ENCODE measurements at regions of chr2 and their contacts with region 1.

Region 1: DNA sequence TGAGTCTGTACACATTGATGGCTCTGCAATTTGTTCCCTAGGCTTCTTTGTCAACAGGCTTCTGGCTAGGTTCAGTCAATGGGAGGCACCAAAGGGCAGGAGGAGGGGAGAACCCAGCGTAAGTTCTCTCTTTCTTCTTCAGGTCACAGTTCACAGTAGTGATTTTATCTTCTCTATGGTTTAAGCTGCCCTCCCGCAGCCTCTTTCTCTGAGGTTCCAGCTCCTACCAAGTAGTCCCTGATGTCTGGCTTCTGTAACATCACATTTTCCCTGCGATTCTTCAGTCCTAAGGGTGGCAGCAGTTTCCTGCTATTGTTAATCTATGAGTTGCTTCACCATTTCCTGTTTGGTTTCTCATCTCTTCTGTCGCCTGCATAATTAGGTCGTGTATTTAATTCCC is 107.4 kb downstream of the CPO start:
- DNase-seq: peak in 6 of 9 experiments; percentile 3 to 66 (median 12)
- ATAC-seq: peak; percentile 65
- H3K4me3 ChIP-seq: no peak overlapping the region
- H3K4me3 Mint-ChIP-seq: peak overlapping the region; percentile 24
- H3K27ac ChIP-seq: no peak overlapping the region
- H3K27ac Mint-ChIP-seq: no peak overlapping the region
- H3K4me1 ChIP-seq: peaks cover 9% of the 10 kb centered on the region
- H3K4me1 Mint-ChIP-seq: peaks cover 10% of the 10 kb centered on the region
- H3K27me3 ChIP-seq: no peaks in the 10 kb centered on the region
- H3K27me3 Mint-ChIP-seq: no peaks in the 10 kb centered on the region
- CTCF ChIP-seq: no peak

Region 2: DNA sequence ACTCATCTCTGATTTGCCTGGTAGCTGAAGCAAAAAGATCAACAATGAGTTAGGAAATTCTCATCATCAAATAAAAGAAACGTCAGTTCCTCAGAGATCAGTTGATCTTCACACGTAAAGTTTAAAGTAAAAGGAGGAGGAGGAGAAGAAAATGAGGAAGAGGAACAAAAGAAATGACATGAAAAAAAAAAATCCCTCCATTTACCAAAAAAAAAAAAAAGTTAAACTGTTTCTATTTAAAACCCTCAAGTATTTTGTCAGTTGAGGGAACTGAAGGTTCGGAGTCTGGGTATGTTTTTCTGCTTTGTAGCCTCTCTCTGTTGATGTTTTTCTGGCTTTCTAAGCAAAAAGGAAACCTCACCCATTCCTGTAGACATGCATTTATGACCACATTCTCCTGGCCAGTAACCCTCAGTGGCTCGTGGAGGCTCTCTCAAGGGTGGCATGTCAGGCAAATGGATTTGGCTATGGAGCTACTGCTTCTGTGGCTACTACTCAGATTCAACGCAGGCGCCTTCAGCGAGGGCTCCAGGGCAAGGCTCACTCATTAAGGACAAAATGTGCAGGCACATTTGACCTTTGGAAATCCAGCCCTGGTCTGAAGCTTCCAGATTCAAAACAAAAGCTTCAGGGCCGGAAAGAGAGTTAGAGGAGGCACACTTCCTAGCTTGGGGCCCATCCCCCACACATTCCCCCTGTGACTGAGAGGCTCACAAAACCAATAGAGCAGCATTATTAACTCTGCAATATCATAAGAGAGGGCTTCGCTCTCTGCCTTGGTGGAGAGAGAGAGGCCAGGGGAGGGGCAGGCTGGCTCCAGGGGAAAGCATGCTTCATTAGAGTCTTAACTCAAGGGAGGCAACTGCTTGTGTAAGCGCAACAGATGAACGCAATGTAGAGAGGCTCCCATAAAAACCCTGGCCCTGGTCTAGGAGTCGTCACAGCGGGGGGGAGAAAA is 96.8 kb after region 1 on chr2:
- CTCF ChIA-PET with region 1: interaction called, 8 read pairs
- POLR2A ChIA-PET with region 1: no interaction called
- intact Hi-C with region 1: loop called in 1 of 2 experiments (anchors 5 kb)
- DNase-seq: peak; percentile 28 to 80 (median 55)
- ATAC-seq: peak; percentile 66
- H3K4me3 ChIP-seq: peak overlapping the region; percentile 6 to 36
- H3K4me3 Mint-ChIP-seq: peak overlapping the region; percentile 71
- H3K27ac ChIP-seq: peak overlapping the region; percentile 66 to 83
- H3K27ac Mint-ChIP-seq: peak overlapping the region; percentile 91
- H3K4me1 ChIP-seq: peaks cover 40% of the 10 kb centered on the region
- H3K4me1 Mint-ChIP-seq: peaks cover 63% of the 10 kb centered on the region
- H3K27me3 ChIP-seq: no peaks in the 10 kb centered on the region
- H3K27me3 Mint-ChIP-seq: no peaks in the 10 kb centered on the region
- CTCF ChIP-seq: no peak

Region 3: DNA sequence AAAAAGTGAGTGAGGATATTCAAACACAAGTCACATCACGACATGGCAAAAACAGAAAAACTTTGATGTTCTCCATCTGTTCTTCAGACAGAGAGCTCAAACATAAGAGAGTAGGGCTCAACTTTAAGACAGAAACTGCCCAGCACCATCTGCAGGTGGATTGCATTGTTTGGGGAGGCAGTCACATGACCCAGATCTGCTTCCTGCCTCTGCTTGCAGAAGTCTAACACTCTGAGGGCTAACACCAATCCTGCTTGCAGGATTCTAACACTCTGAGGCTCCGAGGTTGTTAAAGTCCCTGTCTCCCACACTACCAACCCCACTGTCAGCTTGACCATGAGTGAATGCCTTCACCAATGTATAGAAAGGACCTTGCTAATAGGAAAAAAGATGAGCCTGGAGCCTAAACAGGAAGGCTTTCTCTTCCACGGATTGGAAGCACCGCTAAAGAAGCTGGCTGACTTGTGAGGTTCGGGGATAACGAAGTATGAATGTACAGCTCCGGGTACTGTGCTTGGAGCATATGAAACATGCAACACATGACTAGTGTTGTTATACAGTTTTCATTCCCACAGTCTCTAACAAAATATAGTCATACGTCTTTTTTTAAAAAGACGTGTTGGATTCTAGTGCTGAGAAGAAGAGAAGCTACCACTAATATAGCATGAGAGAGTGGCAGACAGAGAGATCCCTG is 306.4 kb after region 1 on chr2:
- CTCF ChIA-PET with region 1: interaction called, 3 read pairs
- POLR2A ChIA-PET with region 1: no interaction called
- intact Hi-C with region 1: loop called in 1 of 2 experiments (anchors 2 kb)
- DNase-seq: peak in 5 of 9 experiments; percentile 2 to 51 (median 22)
- ATAC-seq: peak; percentile 34
- H3K4me3 ChIP-seq: no peak overlapping the region
- H3K4me3 Mint-ChIP-seq: no peak overlapping the region
- H3K27ac ChIP-seq: no peak overlapping the region
- H3K27ac Mint-ChIP-seq: no peak overlapping the region
- H3K4me1 ChIP-seq: peaks cover 7% of the 10 kb centered on the region
- H3K4me1 Mint-ChIP-seq: peaks cover 8% of the 10 kb centered on the region
- H3K27me3 ChIP-seq: no peaks in the 10 kb centered on the region
- H3K27me3 Mint-ChIP-seq: no peaks in the 10 kb centered on the region
- CTCF ChIP-seq: no peak

Region 4: GRCh38 chr2:207612714-207613113 is 566.0 kb after region 1 on chr2:
- CTCF ChIA-PET with region 1: no interaction called
- POLR2A ChIA-PET with region 1: no interaction called
- intact Hi-C with region 1: no loop called
- DNase-seq: no peak
- ATAC-seq: no peak
- H3K4me3 ChIP-seq: no peak overlapping the region
- H3K4me3 Mint-ChIP-seq: no peak overlapping the region
- H3K27ac ChIP-seq: no peak overlapping the region
- H3K27ac Mint-ChIP-seq: no peak overlapping the region
- H3K4me1 ChIP-seq: no peaks in the 10 kb centered on the region
- H3K4me1 Mint-ChIP-seq: peaks cover 14% of the 10 kb centered on the region
- H3K27me3 ChIP-seq: no peaks in the 10 kb centered on the region
- H3K27me3 Mint-ChIP-seq: no peaks in the 10 kb centered on the region
- CTCF ChIP-seq: no peak

Measured in CD8-positive, alpha-beta T cell (primary cell).